Cardiac septum (tissue), 1 donor: ENCODE measurements at regions of chr7 and their contacts with region 1.

Region 1: DNA sequence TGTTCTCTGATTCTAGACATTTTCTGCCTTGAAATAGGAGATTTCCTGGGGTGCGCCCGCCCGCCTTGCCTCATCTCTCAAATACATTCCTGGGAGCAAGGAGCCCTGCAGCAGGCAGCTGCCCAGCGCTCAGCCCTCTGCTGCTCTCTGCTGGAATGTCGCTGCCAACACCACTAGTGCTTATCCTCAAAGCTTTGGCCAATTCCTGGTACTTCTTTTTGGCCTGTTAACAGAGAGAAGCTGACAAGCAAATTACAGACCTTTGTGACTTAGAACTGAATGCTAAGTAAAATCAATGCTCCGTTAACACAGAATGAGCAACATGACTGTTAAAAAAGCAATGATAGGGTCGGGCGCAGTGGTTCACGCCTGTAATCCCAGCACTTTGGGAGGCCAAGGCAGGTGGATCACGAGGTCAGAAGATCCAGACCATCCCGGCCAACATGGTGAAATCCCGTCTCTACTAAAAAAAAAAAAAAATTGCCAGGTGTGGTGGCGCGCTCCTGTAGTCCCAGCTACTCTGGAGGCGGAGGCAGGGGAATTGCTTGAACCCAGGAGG is 41.9 kb upstream of the SYPL1 start:
- DNase-seq: peak; percentile 84

Region 2: GRCh38 chr7:106056513-106057203 is 97.3 kb before region 1 on chr7:
- intact Hi-C with region 1: loop called (anchors 1 kb)
- DNase-seq: no peak

Region 3: GRCh38 chr7:106112117-106112971 is 41.6 kb before region 1 on chr7 and contains the start of gene SYPL1:
- intact Hi-C with region 1: loop called (anchors 5 kb)
- DNase-seq: peak; percentile 97
- total RNA-seq, gene SYPL1: 58.3 TPM